ENCODE measurements at regions of chr12 and their contacts with region 1.

Region 1: GRCh38 chr12:76031537-76032073 is at the start of gene PHLDA1:
- DNase-seq: peak; percentile 96
- H3K4me3 ChIP-seq: peak within 1 kb of the TSS; percentile 77 to 99 (median 82)
- H3K27ac ChIP-seq: peak within 1 kb of the TSS; percentile 87
- H3K4me1 ChIP-seq: peaks cover 26% of the 10 kb centered on the region
- H3K27me3 ChIP-seq: no peaks in the 10 kb centered on the region
- CTCF ChIP-seq: peak; percentile 60 to 79
- POLR2A ChIP-seq: peak; percentile 98
- total RNA-seq, gene PHLDA1: 26.8 and 30.8 TPM in 2 replicates

Region 2: GRCh38 chr12:75560167-75560566 is 471.4 kb before region 1 on chr12:
- CTCF ChIA-PET with region 1: interaction called, 28 read pairs
- POLR2A ChIA-PET with region 1: interaction called, 3 read pairs
- dilution Hi-C with region 1: no loop called
- intact Hi-C with region 1: loop called (anchors 1 kb)
- DNase-seq: peak; percentile 70
- H3K4me3 ChIP-seq: no peak overlapping the region
- H3K27ac ChIP-seq: no peak overlapping the region
- H3K4me1 ChIP-seq: peaks cover 12% of the 10 kb centered on the region
- H3K27me3 ChIP-seq: no peaks in the 10 kb centered on the region
- CTCF ChIP-seq: peak in 1 of 2 donors; percentile 40
- POLR2A ChIP-seq: no peak

Region 3: GRCh38 chr12:75658901-75659383 is 372.7 kb before region 1 on chr12:
- CTCF ChIA-PET with region 1: interaction called, 11 read pairs
- POLR2A ChIA-PET with region 1: interaction called, 3 read pairs
- dilution Hi-C with region 1: no loop called
- intact Hi-C with region 1: no loop called
- DNase-seq: peak; percentile 77
- H3K4me3 ChIP-seq: no peak overlapping the region
- H3K27ac ChIP-seq: peak overlapping the region; percentile 49
- H3K4me1 ChIP-seq: peaks cover 47% of the 10 kb centered on the region
- H3K27me3 ChIP-seq: no peaks in the 10 kb centered on the region
- CTCF ChIP-seq: no peak
- POLR2A ChIP-seq: no peak

Region 4: DNA sequence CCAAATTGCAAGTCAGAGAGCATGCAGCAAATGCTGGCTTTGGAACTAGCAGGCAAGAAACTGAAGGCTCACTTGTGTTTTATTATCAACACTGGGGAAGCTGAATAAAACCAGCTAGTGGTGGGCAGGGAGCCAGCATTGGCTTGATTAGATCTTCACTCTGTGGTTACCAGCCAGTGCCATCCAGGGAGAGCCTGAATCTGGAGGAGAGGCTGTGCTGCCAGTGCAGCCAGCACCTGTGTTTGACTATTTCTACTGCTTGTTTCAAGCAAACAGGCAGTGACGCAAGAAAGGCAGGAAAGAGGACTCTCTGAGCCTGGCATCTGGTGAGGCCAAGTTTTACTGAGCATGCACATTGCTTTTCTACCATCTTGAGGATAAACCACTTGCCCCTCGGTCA is 247.0 kb before region 1 on chr12:
- CTCF ChIA-PET with region 1: interaction called, 6 read pairs
- POLR2A ChIA-PET with region 1: interaction called, 6 read pairs
- dilution Hi-C with region 1: no loop called
- intact Hi-C with region 1: loop called (anchors 10 kb)
- DNase-seq: peak; percentile 44
- H3K4me3 ChIP-seq: no peak overlapping the region
- H3K27ac ChIP-seq: no peak overlapping the region
- H3K4me1 ChIP-seq: peaks cover 19% of the 10 kb centered on the region
- H3K27me3 ChIP-seq: no peaks in the 10 kb centered on the region
- CTCF ChIP-seq: no peak
- POLR2A ChIP-seq: no peak

Region 5: DNA sequence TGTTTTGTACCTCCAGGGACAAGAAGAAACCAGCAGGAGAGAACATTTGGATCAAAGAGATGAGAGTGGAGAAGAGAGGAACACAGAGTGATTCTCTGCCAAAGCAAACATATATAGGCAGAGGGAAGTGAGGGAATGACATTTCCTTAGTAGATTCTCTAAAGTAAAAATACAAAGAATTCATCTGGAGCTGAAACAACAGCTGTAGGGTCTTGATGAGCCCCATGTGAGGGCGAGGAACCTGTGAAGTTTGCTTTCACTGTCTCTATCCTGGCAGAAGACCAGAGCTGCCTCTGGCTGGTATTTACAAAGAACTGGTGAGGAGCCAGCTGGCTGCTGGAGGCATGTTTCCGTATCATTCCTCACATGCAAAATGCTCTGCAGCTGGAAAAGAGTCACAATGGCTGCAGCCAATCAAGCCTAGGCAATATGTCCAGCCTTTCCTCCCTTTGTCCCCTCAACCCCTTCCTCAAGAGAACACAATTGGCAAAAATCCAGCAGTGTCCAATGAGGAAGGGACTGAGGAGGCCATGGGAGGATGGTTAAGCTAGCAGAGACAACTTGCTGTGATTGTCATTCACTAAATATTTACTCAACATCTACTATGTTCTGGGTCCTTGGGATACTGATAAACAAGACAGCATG is 122.5 kb before region 1 on chr12:
- CTCF ChIA-PET with region 1: interaction called, 4 read pairs
- POLR2A ChIA-PET with region 1: interaction called, 5 read pairs
- dilution Hi-C with region 1: no loop called
- intact Hi-C with region 1: loop called (anchors 1 kb)
- DNase-seq: peak; percentile 93
- H3K4me3 ChIP-seq: no peak overlapping the region
- H3K27ac ChIP-seq: peak overlapping the region; percentile 50
- H3K4me1 ChIP-seq: peaks cover 16% of the 10 kb centered on the region
- H3K27me3 ChIP-seq: no peaks in the 10 kb centered on the region
- CTCF ChIP-seq: no peak
- POLR2A ChIP-seq: no peak

Region 6: GRCh38 chr12:75944097-75944904 is 87.3 kb before region 1 on chr12:
- CTCF ChIA-PET with region 1: interaction called, 4 read pairs
- POLR2A ChIA-PET with region 1: interaction called, 6 read pairs
- dilution Hi-C with region 1: no loop called
- intact Hi-C with region 1: loop called (anchors 1 kb)
- DNase-seq: peak; percentile 86
- H3K4me3 ChIP-seq: no peak overlapping the region
- H3K27ac ChIP-seq: peak overlapping the region; percentile 94
- H3K4me1 ChIP-seq: peaks cover 23% of the 10 kb centered on the region
- H3K27me3 ChIP-seq: no peaks in the 10 kb centered on the region
- CTCF ChIP-seq: no peak
- POLR2A ChIP-seq: peak; percentile 54

Region 7: DNA sequence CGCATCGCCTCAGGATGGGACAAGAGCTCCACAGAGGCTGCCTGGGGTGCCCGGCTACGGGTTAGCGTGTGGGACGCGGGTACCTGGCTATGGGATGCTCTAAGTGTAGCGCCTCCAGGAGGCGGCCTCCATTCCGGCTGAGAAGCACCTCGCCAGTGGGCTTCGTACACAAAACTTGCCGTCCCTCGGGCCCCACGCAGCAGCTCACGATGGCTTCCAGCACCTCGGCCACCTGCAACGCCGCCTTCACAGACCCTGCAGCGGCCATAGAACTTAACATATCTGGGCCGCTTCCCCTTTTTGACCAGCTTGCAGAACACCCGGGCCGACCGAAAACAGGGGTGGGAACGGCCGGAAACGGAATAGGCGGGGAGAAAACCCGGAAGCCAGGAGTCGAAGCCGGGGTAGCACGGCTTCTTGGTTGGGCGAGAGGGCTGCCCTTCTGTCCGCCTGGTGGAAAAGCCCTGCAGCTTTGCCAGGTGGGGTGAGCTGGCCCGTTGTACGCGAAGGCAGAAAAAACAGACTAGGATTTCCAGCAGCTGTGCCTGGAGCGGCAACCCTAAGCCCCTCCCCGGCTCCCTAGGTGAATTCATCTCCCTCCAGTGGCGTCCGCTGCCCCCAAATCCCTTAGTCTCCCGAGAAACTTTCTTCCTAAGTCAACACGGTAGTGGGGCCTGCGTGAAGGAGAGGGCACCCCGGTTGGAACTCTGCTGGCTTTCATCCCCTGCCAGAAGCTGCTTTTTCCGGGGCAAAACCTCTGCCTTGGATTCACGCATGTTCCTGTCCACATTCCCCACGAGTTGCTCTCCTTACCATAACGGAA is 316.7 kb after region 1 on chr12 and contains the start of gene BBS10:
- CTCF ChIA-PET with region 1: interaction called, 23 read pairs
- POLR2A ChIA-PET with region 1: interaction called, 3 read pairs
- dilution Hi-C with region 1: no loop called
- intact Hi-C with region 1: no loop called
- DNase-seq: peak; percentile 90
- H3K4me3 ChIP-seq: peak within 1 kb of the TSS; percentile 27 to 86 (median 82)
- H3K27ac ChIP-seq: peak within 1 kb of the TSS; percentile 44
- H3K4me1 ChIP-seq: peaks cover 18% of the 10 kb centered on the region
- H3K27me3 ChIP-seq: no peaks in the 10 kb centered on the region
- CTCF ChIP-seq: peak; percentile 24 to 66
- POLR2A ChIP-seq: peak; percentile 81
- total RNA-seq, gene BBS10: 7.5 and 7.8 TPM in 2 replicates